Activated CD8-positive, alpha-beta T cell treated with anti-CD3 and anti-CD28 coated beads for 36 hours (primary cell): ENCODE measurements at regions of chr16 and their contacts with region 1.

Region 1: GRCh38 chr16:75464130-75464918 is at the start of gene TMEM170A:
- DNase-seq: peak; percentile 99
- ATAC-seq: peak; percentile 96
- H3K4me3 Mint-ChIP-seq: peak within 1 kb of the TSS; percentile 84
- H3K27ac Mint-ChIP-seq: peak within 1 kb of the TSS; percentile 88
- H3K4me1 Mint-ChIP-seq: peaks cover 41% of the 10 kb centered on the region
- H3K27me3 Mint-ChIP-seq: no peaks in the 10 kb centered on the region
- CTCF ChIP-seq: peak; percentile 99
- total RNA-seq, gene TMEM170A: 25.1 to 27.1 TPM

Region 2: GRCh38 chr16:75432828-75433731 is 31.2 kb before region 1 on chr16 and contains the start of gene CFDP1:
- CTCF ChIA-PET with region 1: interaction called, 12 read pairs
- POLR2A ChIA-PET with region 1: interaction called, 12 read pairs
- intact Hi-C with region 1: no loop called
- DNase-seq: peak; percentile 96
- ATAC-seq: peak; percentile 92
- H3K4me3 Mint-ChIP-seq: peak within 1 kb of the TSS; percentile 77
- H3K27ac Mint-ChIP-seq: peak within 1 kb of the TSS; percentile 94
- H3K4me1 Mint-ChIP-seq: peaks cover 29% of the 10 kb centered on the region
- H3K27me3 Mint-ChIP-seq: no peaks in the 10 kb centered on the region
- CTCF ChIP-seq: no peak
- total RNA-seq, gene CFDP1: 34.7 to 39.9 TPM

Region 3: DNA sequence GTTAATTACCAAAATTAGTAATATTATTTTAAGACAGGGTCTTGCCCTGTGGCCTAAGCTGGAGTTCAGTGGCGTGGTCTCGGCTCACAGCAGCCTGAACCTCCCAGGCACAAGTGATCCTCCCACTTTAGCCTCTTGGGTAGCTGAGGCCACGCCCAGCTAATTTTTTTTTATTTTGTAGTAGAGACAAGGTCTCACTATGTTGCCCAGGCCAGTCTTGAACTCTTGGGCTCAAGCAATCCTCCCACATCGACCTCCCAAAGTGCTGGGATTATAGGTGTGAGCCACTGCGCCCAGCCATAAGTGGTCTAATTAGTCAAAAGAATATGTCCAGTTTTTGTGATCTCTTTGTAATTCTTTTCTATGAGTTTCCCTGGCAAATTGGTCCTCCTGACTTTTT is 19.0 kb before region 1 on chr16:
- CTCF ChIA-PET with region 1: interaction called, 14 read pairs
- POLR2A ChIA-PET with region 1: interaction called, 3 read pairs
- intact Hi-C with region 1: no loop called
- DNase-seq: no peak
- ATAC-seq: no peak
- H3K4me3 Mint-ChIP-seq: no peak overlapping the region
- H3K27ac Mint-ChIP-seq: no peak overlapping the region
- H3K4me1 Mint-ChIP-seq: peaks cover 2% of the 10 kb centered on the region
- H3K27me3 Mint-ChIP-seq: no peaks in the 10 kb centered on the region
- CTCF ChIP-seq: no peak

Region 4: DNA sequence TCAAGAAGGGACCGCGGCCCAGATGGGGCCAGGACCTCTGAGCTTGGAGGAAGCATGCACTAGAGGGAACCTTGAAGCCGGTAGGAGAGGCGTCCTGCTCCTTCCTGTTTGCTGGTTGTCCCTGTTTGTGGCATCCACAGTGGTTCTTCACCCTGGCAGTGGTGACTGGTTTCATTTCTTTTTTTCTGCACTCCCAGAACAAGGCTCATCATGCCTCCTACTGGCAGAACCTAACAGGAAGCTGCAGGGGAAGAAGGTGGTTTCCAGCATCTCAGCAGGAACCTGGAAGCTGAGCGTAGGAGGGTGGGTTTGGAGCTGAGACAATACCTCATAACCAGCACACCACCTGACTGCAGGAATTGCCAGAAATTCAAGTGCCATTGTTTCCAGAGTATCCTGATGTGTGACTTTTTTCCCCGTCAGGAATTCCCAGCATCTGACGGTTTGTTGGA is 85.9 kb after region 1 on chr16:
- CTCF ChIA-PET with region 1: interaction called, 11 read pairs
- POLR2A ChIA-PET with region 1: no interaction called
- intact Hi-C with region 1: no loop called
- DNase-seq: peak; percentile 47
- ATAC-seq: peak; percentile 72
- H3K4me3 Mint-ChIP-seq: no peak overlapping the region
- H3K27ac Mint-ChIP-seq: no peak overlapping the region
- H3K4me1 Mint-ChIP-seq: no peaks in the 10 kb centered on the region
- H3K27me3 Mint-ChIP-seq: peaks cover 6% of the 10 kb centered on the region
- CTCF ChIP-seq: peak; percentile 29

Region 5: DNA sequence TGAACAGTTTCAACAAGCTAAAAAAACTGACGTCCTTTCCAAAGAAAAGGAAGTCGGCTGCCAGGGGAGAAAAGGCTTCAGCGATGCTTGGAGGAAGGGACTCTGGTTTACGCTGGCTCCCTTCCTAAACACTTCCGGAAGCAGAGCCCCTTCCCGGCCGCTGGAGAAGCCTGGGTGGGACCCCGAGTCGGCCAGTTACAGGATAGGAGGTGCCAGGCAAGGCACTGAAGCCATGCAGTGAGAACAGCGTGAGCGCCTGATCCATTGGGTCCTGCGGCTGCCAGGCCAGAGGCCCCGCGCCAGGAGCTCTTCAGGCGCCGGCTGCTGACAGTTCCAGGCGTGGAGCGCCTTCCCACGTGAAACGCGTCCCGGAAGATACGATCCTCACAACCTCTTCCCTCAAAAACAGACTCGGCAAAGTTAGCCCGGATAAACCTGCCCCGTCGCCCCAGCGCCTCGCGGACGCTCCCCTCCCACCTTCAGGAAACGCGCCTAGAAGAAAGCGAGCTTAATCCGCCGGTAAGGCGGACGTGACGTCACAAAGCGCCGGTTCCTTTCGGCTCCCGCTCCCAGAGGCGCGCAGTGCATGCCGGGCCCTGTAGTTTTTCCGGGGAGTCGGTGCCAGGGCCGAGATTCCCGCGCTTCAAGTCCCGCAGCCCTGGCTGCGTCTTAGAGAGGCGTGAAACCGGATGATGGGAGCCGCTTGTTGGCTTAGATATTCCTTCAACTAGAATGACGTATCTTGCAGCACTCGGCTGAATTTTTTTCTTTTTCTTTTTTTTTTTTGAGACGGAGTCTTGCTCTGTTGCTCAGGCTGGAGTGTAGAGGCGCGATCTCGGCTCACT is 158.7 kb after region 1 on chr16 and contains the start of gene ADAT1:
- CTCF ChIA-PET with region 1: interaction called, 7 read pairs
- POLR2A ChIA-PET with region 1: interaction called, 6 read pairs
- intact Hi-C with region 1: loop called (anchors 10 kb)
- DNase-seq: peak; percentile 99
- ATAC-seq: peak; percentile 93
- H3K4me3 Mint-ChIP-seq: peak within 1 kb of the TSS; percentile 97
- H3K27ac Mint-ChIP-seq: peak within 1 kb of the TSS; percentile 96
- H3K4me1 Mint-ChIP-seq: peaks cover 45% of the 10 kb centered on the region
- H3K27me3 Mint-ChIP-seq: no peaks in the 10 kb centered on the region
- CTCF ChIP-seq: no peak
- total RNA-seq, gene ADAT1: 41.7 to 43.6 TPM